ENCODE measurements at regions of chr14 and their contacts with region 1.

Region 1: DNA sequence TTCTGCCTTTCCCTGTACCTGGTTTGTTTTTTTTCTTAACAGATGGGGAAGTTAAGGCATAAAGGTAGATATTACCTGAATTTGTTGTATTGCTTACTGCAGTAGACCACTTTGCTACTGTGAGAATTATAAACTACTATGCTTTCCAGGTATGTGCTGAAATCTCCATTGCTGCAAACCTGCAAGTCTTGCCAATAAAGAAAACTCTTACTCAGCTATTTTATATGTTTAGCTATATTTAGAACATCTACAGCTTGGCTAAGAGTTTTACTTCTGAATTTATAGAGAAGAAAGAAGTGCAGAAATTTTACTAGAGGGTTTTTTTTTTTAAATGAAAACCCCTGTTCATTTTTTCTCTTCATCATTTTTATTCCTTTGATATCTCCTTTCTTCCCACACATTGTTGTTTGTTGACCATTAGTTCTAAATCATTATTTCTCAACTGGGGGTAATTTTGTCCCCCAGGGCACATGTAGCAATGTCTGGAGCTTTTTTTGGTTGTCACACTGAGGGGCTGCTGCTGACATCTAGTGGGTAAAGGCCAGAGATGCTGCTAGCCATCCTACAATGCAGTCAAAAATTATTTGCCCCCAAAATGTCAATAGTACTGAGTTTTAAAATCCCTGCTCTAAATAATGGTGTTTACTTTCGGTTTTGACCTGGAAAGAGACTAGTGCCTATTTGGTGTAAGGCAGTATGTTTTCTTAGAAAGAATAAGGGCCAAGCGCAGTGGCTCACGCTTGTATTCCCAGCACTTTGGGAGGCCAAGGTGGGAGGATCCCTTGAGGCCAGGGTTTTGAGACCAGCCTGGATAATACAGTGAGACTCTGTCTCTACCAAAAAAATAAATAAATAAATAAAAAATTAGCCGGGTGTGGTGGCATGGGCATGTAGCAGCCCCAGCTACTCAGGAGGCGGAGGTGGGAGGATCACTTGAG is 48.6 kb downstream of the PCNX1 start:
- DNase-seq: peak in 1 of 4 experiments; percentile 22
- ATAC-seq: 0 out of 3 replicates have a peak, but pooled peaks have one; percentile 51
- H3K4me3 ChIP-seq: no peak overlapping the region
- H3K27ac ChIP-seq: no peak overlapping the region
- H3K4me1 ChIP-seq: no peaks in the 10 kb centered on the region
- H3K27me3 ChIP-seq: no peaks in the 10 kb centered on the region
- CTCF ChIP-seq: peak; percentile 42 to 58 (median 44); a peak in 4 of 6 replicates
- EP300 ChIP-seq: no peak
- POLR2A ChIP-seq: no peak
- RAD21 ChIP-seq: peak; percentile 50 to 61

Region 2: GRCh38 chr14:70821584-70822529 is 134.0 kb before region 1 on chr14:
- CTCF ChIA-PET with region 1: interaction called, 3 read pairs
- POLR2A ChIA-PET with region 1: no interaction called
- in situ Hi-C with region 1: no loop called
- intact Hi-C with region 1: loop called (anchors 1 kb)
- DNase-seq: peak in 3 of 4 experiments; percentile 14 to 27 (median 27)
- ATAC-seq: peak; percentile 58
- H3K4me3 ChIP-seq: peak overlapping the region; percentile 13; the same call in 1 of the 2 replicates
- H3K27ac ChIP-seq: no peak overlapping the region
- H3K4me1 ChIP-seq: peaks cover 0 to 8% of the 10 kb centered on the region in 2 experiments; a peak in 2 of 5 replicates
- H3K27me3 ChIP-seq: peaks cover 4 to 6% of the 10 kb centered on the region in 2 experiments; a peak in 4 of 5 replicates
- CTCF ChIP-seq: no peak
- EP300 ChIP-seq: no peak
- POLR2A ChIP-seq: no peak
- RAD21 ChIP-seq: no peak

Region 3: GRCh38 chr14:70907176-70907995 is 48.4 kb before region 1 on chr14 and contains the start of gene PCNX1:
- CTCF ChIA-PET with region 1: no interaction called
- POLR2A ChIA-PET with region 1: interaction called, 3 read pairs
- in situ Hi-C with region 1: no loop called
- intact Hi-C with region 1: loop called (anchors 5 kb)
- DNase-seq: peak; percentile 79 to 89 (median 87)
- ATAC-seq: peak; percentile 96
- H3K4me3 ChIP-seq: peak within 1 kb of the TSS; percentile 55
- H3K27ac ChIP-seq: no peak within 1 kb of the TSS
- H3K4me1 ChIP-seq: peaks cover 2 to 14% of the 10 kb centered on the region in 2 experiments; a peak in 3 of 5 replicates
- H3K27me3 ChIP-seq: no peaks in the 10 kb centered on the region
- CTCF ChIP-seq: peak; percentile 64 to 87 (median 65)
- EP300 ChIP-seq: no peak
- POLR2A ChIP-seq: no peak
- RAD21 ChIP-seq: peak; percentile 39 to 44
- polyA plus RNA-seq, gene PCNX1: 0.30 to 0.39 TPM

Region 4: GRCh38 chr14:71029236-71029781 is 73.5 kb after region 1 on chr14:
- CTCF ChIA-PET with region 1: no interaction called
- POLR2A ChIA-PET with region 1: no interaction called
- in situ Hi-C with region 1: no loop called
- intact Hi-C with region 1: no loop called
- DNase-seq: no peak
- ATAC-seq: no peak
- H3K4me3 ChIP-seq: no peak overlapping the region
- H3K27ac ChIP-seq: no peak overlapping the region
- H3K4me1 ChIP-seq: no peaks in the 10 kb centered on the region
- H3K27me3 ChIP-seq: no peaks in the 10 kb centered on the region
- CTCF ChIP-seq: no peak
- EP300 ChIP-seq: no peak
- POLR2A ChIP-seq: no peak
- RAD21 ChIP-seq: no peak

Measured in K562 (cell line).